Naive thymus-derived CD4-positive, alpha-beta T cell (primary cell): ENCODE measurements at regions of chr6 and their contacts with region 1.

Region 1: DNA sequence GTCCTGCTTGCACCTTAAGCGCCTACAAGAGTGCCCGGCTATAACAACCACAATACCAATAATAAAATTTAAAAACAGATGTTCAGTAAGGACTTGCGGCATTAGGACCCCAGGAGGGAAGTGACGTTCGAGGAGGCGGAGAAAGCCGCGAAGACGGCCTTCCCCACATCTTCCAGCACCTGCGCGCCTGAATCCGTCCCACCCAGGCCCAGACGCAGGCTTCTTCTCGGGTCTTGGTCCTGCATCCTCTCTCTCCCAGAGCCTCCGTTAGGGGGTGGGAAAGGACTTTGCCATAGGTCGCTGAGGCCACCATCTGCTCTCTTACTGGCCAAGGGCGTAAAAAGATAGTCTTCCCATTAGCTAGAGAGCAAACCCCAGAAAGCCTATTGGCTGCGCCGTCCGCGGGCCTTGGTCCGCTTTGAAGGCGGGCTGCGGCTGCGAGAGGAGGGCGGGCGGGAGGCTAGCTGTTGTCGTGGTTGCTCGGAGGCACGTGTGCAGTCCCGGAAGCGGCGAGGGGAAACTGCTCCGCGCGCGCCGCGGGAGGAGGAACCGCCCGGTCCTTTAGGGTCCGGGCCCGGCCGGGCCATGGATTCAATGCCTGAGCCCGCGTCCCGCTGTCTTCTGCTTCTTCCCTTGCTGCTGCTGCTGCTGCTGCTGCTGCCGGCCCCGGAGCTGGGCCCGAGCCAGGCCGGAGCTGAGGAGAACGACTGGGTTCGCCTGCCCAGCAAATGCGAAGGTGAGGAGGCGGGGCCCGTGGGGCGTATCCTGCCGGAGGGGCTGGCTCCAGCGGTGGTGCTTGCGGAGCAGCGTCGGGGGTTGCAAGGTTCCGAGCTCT is at the start of gene CNPY3:
- DNase-seq: peak; percentile 80 to 96 (median 95)
- ATAC-seq: peak; percentile 90
- H3K4me3 ChIP-seq: peak within 1 kb of the TSS; percentile 80
- H3K4me3 Mint-ChIP-seq: peak within 1 kb of the TSS; percentile 86 to 99 (median 98)
- H3K27ac ChIP-seq: peak within 1 kb of the TSS; percentile 95
- H3K27ac Mint-ChIP-seq: peak within 1 kb of the TSS; percentile 96 to 100 (median 99)
- H3K4me1 ChIP-seq: peaks cover 33% of the 10 kb centered on the region in 2 donors
- H3K4me1 Mint-ChIP-seq: peaks cover 34 to 53% (median 43%) of the 10 kb centered on the region in 7 donors
- H3K27me3 ChIP-seq: no peaks in the 10 kb centered on the region
- H3K27me3 Mint-ChIP-seq: no peaks in the 10 kb centered on the region
- total RNA-seq, gene CNPY3: 58.6 to 98.9 (median 87.4) TPM

Region 2: DNA sequence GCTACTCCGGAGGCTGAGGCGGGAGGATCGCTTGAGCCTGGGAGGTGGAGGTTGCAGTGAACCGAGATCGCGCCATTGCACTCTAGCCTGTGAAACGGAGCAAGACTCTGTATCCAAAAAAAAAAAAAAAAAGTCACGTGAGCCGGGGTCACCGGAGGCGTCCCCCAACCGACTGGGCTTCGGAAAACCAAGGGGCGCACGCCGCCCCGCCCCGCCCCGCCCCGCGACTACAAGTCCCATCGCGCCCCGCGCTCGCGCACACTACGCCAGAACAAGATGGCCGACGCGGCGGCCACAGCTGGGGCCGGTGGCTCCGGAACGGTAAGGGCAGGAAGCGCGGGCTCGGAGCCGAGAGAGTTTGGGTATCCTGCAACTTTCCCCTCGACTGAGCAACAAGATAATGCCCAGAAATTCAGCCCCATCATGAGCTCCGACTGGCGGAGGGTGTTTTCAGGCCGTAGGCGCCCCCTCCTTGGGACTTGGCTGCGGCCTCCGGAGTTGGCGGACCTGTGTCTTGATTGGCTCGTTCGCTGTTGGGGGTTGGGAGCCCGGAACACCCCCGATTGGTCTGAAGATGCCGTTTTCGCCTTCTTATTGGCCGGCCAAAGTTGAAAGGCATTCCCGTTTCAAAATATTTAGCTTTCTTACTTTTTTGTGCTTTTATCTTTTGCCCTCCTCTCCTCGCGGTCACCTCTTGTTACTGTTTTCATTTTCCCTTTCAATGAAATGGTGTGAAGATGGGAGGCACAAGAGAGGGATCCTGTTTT is 878.8 kb before region 1 on chr6 and contains the start of gene TAF8:
- CTCF ChIA-PET with region 1: no interaction called
- POLR2A ChIA-PET with region 1: interaction called, 3 read pairs
- intact Hi-C with region 1: loop called in 1 of 2 experiments (anchors 1 kb)
- DNase-seq: peak; percentile 76 to 89 (median 87)
- ATAC-seq: peak; percentile 80
- H3K4me3 ChIP-seq: peak within 1 kb of the TSS; percentile 98
- H3K4me3 Mint-ChIP-seq: peak within 1 kb of the TSS; percentile 89 to 99 (median 99)
- H3K27ac ChIP-seq: peak within 1 kb of the TSS; percentile 78
- H3K27ac Mint-ChIP-seq: peak within 1 kb of the TSS; percentile 93 to 98 (median 97)
- H3K4me1 ChIP-seq: peaks cover 24 to 27% of the 10 kb centered on the region in 2 donors
- H3K4me1 Mint-ChIP-seq: peaks cover 36 to 70% (median 51%) of the 10 kb centered on the region in 7 donors
- H3K27me3 ChIP-seq: no peaks in the 10 kb centered on the region
- H3K27me3 Mint-ChIP-seq: no peaks in the 10 kb centered on the region
- total RNA-seq, gene TAF8: 41.6 to 58.2 (median 50.8) TPM

Region 3: GRCh38 chr6:42618686-42619085 is 310.5 kb before region 1 on chr6:
- CTCF ChIA-PET with region 1: no interaction called
- POLR2A ChIA-PET with region 1: no interaction called
- intact Hi-C with region 1: no loop called
- DNase-seq: no peak
- ATAC-seq: no peak
- H3K4me3 ChIP-seq: no peak overlapping the region
- H3K4me3 Mint-ChIP-seq: no peak overlapping the region
- H3K27ac ChIP-seq: no peak overlapping the region
- H3K27ac Mint-ChIP-seq: peak overlapping the region in 2 of 9 donors; percentile 12 to 61
- H3K4me1 ChIP-seq: no peaks in the 10 kb centered on the region
- H3K4me1 Mint-ChIP-seq: peaks cover 0 to 4% (median 0%) of the 10 kb centered on the region in 7 donors
- H3K27me3 ChIP-seq: no peaks in the 10 kb centered on the region
- H3K27me3 Mint-ChIP-seq: no peaks in the 10 kb centered on the region

Region 4: DNA sequence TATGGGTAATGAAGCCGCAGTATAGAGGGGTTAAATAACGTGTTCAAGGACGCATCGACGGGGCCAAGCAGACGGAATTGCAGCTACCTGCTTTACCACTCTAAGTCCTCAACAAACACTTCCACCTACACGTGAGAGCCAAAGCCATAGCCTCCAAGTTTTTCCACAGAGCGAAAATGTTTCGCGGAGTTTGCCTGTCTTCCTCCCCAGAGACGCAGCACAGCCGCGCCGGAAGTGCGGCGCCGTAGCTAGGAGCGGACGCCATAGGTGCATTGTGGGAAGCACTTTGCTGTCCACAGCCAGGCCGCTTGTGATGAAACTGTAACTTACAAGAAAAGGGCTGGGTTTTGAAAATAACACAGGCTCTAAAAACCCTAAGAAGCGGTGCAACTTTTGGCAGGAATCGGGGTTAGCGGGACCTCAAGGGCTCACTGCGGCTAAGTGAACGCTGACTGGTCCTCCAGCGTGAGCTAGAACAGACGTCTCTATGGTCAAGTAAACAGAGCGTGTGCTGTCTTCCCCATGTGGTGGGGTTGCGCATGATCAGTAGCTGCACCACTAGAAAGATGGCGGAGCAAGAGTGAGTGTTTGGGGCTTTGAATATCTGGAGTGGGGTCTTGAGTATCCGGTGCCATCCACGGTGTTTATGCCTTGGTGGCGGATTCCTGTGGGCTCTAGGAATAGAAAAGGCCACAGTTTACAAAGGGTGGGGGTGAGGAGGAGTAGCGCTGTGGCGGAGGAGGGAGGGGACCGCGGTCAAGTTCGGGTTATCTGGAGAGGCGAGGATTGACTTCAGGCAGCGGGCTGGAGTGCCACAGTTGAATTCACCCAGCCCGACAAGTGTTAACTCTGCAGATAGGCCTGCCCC is 49.6 kb before region 1 on chr6 and contains the start of gene RPL7L1:
- CTCF ChIA-PET with region 1: no interaction called
- POLR2A ChIA-PET with region 1: interaction called, 11 read pairs
- intact Hi-C with region 1: loop called (anchors 1 kb)
- DNase-seq: peak; percentile 70 to 93 (median 88)
- ATAC-seq: peak; percentile 95
- H3K4me3 ChIP-seq: peak within 1 kb of the TSS; percentile 82
- H3K4me3 Mint-ChIP-seq: peak within 1 kb of the TSS; percentile 93 to 99 (median 96)
- H3K27ac ChIP-seq: peak within 1 kb of the TSS; percentile 89
- H3K27ac Mint-ChIP-seq: peak within 1 kb of the TSS; percentile 98 to 100 (median 99)
- H3K4me1 ChIP-seq: peaks cover 5 to 7% of the 10 kb centered on the region in 2 donors
- H3K4me1 Mint-ChIP-seq: peaks cover 7 to 40% (median 29%) of the 10 kb centered on the region in 7 donors
- H3K27me3 ChIP-seq: no peaks in the 10 kb centered on the region
- H3K27me3 Mint-ChIP-seq: no peaks in the 10 kb centered on the region
- total RNA-seq, gene RPL7L1: 65.6 to 91.7 (median 78.1) TPM

Region 5: GRCh38 chr6:42958125-42958524 is 28.9 kb after region 1 on chr6:
- CTCF ChIA-PET with region 1: no interaction called
- POLR2A ChIA-PET with region 1: interaction called, 12 read pairs
- intact Hi-C with region 1: loop called in 1 of 2 experiments (anchors 1 kb)
- DNase-seq: no peak
- ATAC-seq: no peak
- H3K4me3 ChIP-seq: no peak overlapping the region
- H3K4me3 Mint-ChIP-seq: no peak overlapping the region
- H3K27ac ChIP-seq: no peak overlapping the region
- H3K27ac Mint-ChIP-seq: no peak overlapping the region
- H3K4me1 ChIP-seq: peaks cover 0 to 5% of the 10 kb centered on the region in 2 donors
- H3K4me1 Mint-ChIP-seq: peaks cover 0 to 24% (median 16%) of the 10 kb centered on the region in 7 donors
- H3K27me3 ChIP-seq: no peaks in the 10 kb centered on the region
- H3K27me3 Mint-ChIP-seq: peaks cover 0 to 19% (median 0%) of the 10 kb centered on the region in 5 donors

Region 6: GRCh38 chr6:43021270-43022047 is 92.3 kb after region 1 on chr6 and contains the start of gene RRP36:
- CTCF ChIA-PET with region 1: no interaction called
- POLR2A ChIA-PET with region 1: interaction called, 67 read pairs
- intact Hi-C with region 1: no loop called
- DNase-seq: peak; percentile 33 to 76 (median 51)
- ATAC-seq: peak; percentile 88
- H3K4me3 ChIP-seq: peak within 1 kb of the TSS; percentile 89
- H3K4me3 Mint-ChIP-seq: peak within 1 kb of the TSS; percentile 95 to 99 (median 98)
- H3K27ac ChIP-seq: peak within 1 kb of the TSS; percentile 81
- H3K27ac Mint-ChIP-seq: peak within 1 kb of the TSS; percentile 74 to 97 (median 93)
- H3K4me1 ChIP-seq: peaks cover 11 to 19% of the 10 kb centered on the region in 2 donors
- H3K4me1 Mint-ChIP-seq: peaks cover 23 to 60% (median 41%) of the 10 kb centered on the region in 7 donors
- H3K27me3 ChIP-seq: no peaks in the 10 kb centered on the region
- H3K27me3 Mint-ChIP-seq: no peaks in the 10 kb centered on the region
- total RNA-seq, gene RRP36: 25.4 to 66.3 (median 48.4) TPM

Region 7: DNA sequence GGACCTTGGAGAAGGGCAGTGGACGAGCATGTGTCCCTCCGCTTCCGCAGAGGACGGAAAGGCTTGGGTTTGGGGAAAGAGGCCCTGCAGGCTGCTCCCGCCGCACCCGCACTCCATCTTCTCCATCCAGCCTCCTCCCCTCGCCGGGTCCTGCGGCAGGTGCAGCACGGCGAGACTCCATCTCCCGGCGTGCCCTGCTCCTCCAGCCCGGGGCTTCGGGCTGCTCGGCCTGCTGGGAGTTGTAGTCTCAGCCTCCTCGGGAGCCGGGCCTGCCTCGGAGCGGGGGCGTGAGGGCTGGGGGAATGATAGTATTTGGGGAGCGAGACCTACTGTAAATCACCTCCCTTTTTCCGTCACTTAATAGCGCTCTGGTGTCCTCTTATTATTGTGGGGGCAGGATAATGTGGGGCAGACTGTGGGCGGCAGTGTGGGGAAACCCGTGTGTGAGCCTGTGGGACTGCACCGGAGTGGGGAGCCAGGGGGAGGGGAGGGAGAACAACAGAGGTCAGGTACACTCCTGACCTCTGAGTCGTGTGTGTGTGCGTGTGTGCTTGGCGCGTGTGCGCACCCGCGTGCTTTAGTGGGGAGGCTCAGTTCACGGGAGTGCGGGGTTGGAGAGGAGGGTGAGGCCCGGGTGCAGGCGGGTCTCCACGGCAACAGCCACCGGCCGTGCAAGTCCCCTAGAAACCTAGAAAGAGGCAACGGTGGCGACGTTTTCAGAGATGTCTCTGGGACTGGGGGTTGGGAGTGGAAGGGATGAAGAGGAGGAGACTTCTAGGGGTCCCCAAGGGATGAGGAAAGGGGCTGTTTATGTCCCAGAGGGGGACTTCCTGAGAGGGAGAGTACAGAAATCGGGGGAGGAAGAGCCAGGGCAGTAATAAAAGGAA is 318.2 kb after region 1 on chr6:
- CTCF ChIA-PET with region 1: no interaction called
- POLR2A ChIA-PET with region 1: no interaction called
- intact Hi-C with region 1: loop called in 1 of 2 experiments (anchors 1 kb)
- DNase-seq: peak; percentile 65 to 81 (median 78)
- ATAC-seq: peak; percentile 95
- H3K4me3 ChIP-seq: peak overlapping the region; percentile 84
- H3K4me3 Mint-ChIP-seq: peak overlapping the region in 9 of 10 donors; percentile 83 to 94 (median 88)
- H3K27ac ChIP-seq: peak overlapping the region; percentile 78
- H3K27ac Mint-ChIP-seq: peak overlapping the region; percentile 76 to 92 (median 89)
- H3K4me1 ChIP-seq: peaks cover 3 to 13% of the 10 kb centered on the region in 2 donors
- H3K4me1 Mint-ChIP-seq: peaks cover 11 to 26% (median 21%) of the 10 kb centered on the region in 7 donors
- H3K27me3 ChIP-seq: peaks cover 3 to 13% of the 10 kb centered on the region in 2 donors
- H3K27me3 Mint-ChIP-seq: peaks cover 7 to 33% (median 14%) of the 10 kb centered on the region in 5 donors

Region 8: GRCh38 chr6:43516697-43517504 is 587.7 kb after region 1 on chr6 and contains the starts of genes POLR1C and YIPF3:
- CTCF ChIA-PET with region 1: no interaction called
- POLR2A ChIA-PET with region 1: no interaction called
- intact Hi-C with region 1: loop called (anchors 1 to 2 kb)
- DNase-seq: peak; percentile 83 to 97 (median 96)
- ATAC-seq: peak; percentile 95
- H3K4me3 ChIP-seq: peak within 1 kb of the TSS; percentile 100
- H3K4me3 Mint-ChIP-seq: no peak within 1 kb of the TSS
- H3K27ac ChIP-seq: peak within 1 kb of the TSS; percentile 96
- H3K27ac Mint-ChIP-seq: no peak within 1 kb of the TSS
- H3K4me1 ChIP-seq: peaks cover 32 to 36% of the 10 kb centered on the region in 2 donors
- H3K4me1 Mint-ChIP-seq: peaks cover 8 to 36% (median 31%) of the 10 kb centered on the region in 7 donors
- H3K27me3 ChIP-seq: no peaks in the 10 kb centered on the region
- H3K27me3 Mint-ChIP-seq: no peaks in the 10 kb centered on the region
- total RNA-seq, gene POLR1C: 36.3 to 61.1 (median 40.9) TPM
- total RNA-seq, gene YIPF3: 54.4 to 75.9 (median 67.3) TPM